Upper lobe of right lung (tissue), 1 donor: ENCODE measurements at regions of chr11 and their contacts with region 1.

Region 1: GRCh38 chr11:93234602-93235207 is 36.9 kb upstream of the SLC36A4 start:
- DNase-seq: peak; percentile 80
- ATAC-seq: peak; percentile 98
- H3K4me3 ChIP-seq: no peak overlapping the region
- H3K27ac ChIP-seq: no peak overlapping the region
- H3K4me1 ChIP-seq: no peaks in the 10 kb centered on the region
- H3K27me3 ChIP-seq: no peaks in the 10 kb centered on the region
- CTCF ChIP-seq: peak; percentile 91

Region 2: GRCh38 chr11:93543292-93543977 is 308.7 kb after region 1 on chr11 and contains the start of gene SMCO4:
- intact Hi-C with region 1: loop called (anchors 5 kb)
- DNase-seq: peak; percentile 95
- ATAC-seq: peak; percentile 95
- H3K4me3 ChIP-seq: peak within 1 kb of the TSS; percentile 66
- H3K27ac ChIP-seq: peak within 1 kb of the TSS; percentile 81
- H3K4me1 ChIP-seq: peaks cover 38% of the 10 kb centered on the region
- H3K27me3 ChIP-seq: no peaks in the 10 kb centered on the region
- CTCF ChIP-seq: peak; percentile 74
- total RNA-seq, gene SMCO4: 55.7 TPM

Region 3: GRCh38 chr11:93652161-93652597 is 417.5 kb after region 1 on chr11:
- intact Hi-C with region 1: loop called (anchors 5 kb)
- DNase-seq: no peak
- ATAC-seq: peak; percentile 7
- H3K4me3 ChIP-seq: no peak overlapping the region
- H3K27ac ChIP-seq: no peak overlapping the region
- H3K4me1 ChIP-seq: no peaks in the 10 kb centered on the region
- H3K27me3 ChIP-seq: no peaks in the 10 kb centered on the region
- CTCF ChIP-seq: peak; percentile 71

Region 4: DNA sequence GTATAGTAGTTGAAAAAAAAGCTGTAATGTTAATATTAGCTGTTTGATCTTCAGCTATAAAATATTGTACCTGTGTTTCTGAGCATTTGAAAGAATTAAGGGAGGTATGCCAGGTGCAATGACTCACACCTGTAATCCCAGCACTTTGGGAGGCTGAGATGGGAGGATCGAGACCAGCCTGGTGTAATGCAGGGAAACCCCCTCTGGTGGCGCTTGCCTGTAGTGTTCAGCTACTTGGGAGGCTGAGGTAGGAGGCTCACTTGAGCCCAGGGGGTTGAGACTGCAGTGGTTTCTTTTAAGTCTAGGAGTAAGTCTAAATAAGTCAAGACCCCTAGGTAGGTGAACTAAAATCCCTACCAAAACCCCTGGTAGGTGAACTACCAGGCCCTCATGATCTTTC is 469.5 kb after region 1 on chr11:
- intact Hi-C with region 1: no loop called
- DNase-seq: no peak
- ATAC-seq: no peak
- H3K4me3 ChIP-seq: no peak overlapping the region
- H3K27ac ChIP-seq: no peak overlapping the region
- H3K4me1 ChIP-seq: no peaks in the 10 kb centered on the region
- H3K27me3 ChIP-seq: no peaks in the 10 kb centered on the region
- CTCF ChIP-seq: no peak